ENCODE measurements at regions of chrX and their contacts with region 1.

Region 1: DNA sequence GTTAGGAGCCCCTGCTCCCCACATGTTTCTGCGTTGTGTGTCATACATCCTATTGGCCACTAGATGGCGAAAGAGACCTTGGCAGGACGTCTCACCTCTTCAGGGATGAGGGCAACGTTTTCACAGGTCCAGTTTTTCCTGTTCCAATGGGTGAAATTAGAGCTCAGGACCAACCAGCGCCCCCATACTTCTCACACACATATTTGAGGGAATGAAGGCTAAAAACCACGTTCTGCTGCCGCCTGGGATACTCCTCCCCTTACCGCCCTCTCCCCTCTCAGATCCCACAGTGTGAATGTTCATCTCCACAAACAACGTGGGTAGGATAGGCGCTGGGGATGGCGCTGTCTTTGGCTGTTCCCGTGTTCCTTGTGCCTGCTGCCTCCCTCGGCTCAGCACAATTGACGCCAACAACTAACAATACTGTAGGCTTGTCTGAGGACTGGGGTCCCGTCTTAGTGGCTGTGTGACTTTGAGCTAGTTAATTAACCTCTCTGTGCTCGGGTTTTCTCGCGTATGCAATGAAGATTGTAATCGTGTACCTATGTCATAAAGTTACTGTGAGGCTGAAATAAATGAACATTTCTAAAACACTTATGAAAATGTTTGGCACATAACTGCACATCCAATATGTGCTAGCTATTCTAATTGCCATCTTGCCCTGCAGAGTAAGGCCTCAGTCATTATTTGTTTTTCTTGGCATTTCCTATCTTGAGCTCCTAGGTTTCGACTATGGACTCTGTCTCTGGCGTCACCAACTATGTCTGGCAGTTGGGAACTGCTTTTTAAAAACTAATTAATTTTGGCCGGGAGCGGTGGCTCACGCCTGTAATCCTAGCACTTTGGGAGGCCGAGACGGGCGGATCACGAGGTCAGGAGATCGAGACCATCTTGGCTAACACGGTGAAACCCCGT is 181.3 kb upstream of the STK26 start:
- DNase-seq: peak; percentile 30
- ATAC-seq: peak; percentile 68

Region 2: DNA sequence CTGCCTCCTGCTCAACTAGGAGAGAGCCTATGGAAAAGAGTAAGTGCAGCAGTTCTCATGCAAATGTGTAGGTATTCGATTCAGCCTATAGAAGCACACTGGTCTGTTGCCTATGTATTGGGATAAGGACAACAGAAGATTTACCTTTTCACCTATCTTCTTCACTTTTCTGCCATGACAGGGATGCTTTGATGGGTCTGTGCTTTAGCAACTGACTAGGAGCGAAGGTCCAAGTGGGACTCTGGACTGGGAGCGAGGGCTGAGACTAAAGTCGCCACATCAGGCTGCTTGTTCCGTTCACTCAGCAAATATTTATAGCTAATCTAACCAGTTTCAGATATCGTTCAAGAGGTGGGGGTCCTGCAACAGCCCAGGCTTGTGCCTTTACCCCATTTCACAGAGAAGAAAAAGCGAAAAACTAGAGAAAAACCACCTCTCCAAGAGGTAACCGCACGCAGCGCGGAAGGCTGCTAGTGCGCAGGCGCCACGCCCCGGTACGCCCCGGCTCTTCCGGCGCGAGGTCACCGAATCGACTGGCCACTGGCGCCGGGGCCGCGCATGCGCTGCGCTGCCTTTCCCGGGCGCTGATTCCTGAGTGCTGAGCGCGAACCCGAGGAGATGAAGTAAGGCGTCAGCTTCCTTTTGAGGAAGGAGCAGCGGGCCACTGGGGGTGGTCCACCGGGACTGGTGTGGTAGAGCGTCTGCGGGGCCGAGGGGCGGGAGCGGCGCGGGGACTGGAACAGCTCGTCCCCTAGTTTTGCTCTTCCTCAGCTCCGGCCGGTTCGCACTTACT is 1440.1 kb before region 1 on chrX and contains the start of gene RBMX2:
- intact Hi-C with region 1: no loop called
- DNase-seq: peak; percentile 78
- ATAC-seq: peak; percentile 99
- total RNA-seq, gene RBMX2: 11.5 to 12.8 TPM

Region 3: DNA sequence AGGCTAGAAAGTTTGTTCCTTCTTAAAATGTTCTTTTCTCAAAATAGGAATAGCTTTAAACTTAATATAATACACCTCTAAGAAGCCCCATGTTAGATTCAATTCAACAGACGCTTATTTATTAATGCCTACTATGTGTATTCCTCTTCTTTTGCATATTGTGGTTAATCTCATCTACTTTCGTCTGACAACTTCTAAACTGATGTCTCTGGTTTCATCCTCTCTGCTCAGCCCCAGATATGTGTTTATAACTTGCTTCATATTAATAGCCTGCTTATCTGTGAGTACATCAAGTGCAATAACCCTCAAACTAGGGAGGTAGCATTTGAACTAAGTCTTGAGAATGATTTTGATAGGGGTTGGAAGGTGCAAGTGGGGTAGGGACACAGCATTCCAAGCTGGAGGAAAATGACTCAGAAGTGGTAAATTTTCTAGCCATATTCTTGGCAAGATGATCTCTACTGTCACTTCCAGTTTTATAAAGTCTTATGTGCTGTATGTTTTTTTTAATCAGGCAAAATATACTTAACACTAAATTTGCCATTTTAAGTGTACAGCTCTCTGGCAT is 218.3 kb after region 1 on chrX:
- intact Hi-C with region 1: loop called in 1 of 2 experiments (anchors 10 kb)
- DNase-seq: no peak
- ATAC-seq: no peak

Region 4: DNA sequence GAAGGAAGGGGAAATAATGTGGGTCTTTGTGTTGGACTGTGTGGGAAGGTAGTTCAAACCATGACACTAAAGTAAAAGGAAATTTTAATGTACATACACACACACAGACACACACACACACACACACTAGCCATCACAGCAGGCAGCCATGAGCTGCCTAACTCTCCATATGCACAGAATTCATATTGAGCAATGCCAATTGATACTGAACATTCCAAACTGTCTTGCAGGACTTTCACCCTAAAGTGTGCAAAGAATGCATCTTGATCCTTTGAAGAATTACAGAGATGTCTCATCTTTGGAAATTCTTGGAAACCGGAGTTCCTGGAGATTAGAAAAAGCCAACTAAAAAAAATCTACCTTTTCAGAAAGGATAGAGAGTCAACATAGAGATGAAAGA is 767.6 kb after region 1 on chrX:
- intact Hi-C with region 1: loop called in 1 of 2 experiments (anchors 10 kb)
- DNase-seq: no peak
- ATAC-seq: no peak

Region 5: GRCh38 chrX:132631579-132632232 is 790.0 kb after region 1 on chrX:
- intact Hi-C with region 1: loop called in 1 of 2 experiments (anchors 5 kb)
- DNase-seq: no peak
- ATAC-seq: peak; percentile 25 to 41

Measured in left cardiac atrium (tissue), 4 donors.